ENCODE measurements at regions of chrX and their contacts with region 1.

Region 1: GRCh38 chrX:103686199-103687072 is at the start of gene MORF4L2:
- DNase-seq: peak; percentile 97
- ATAC-seq: peak; percentile 83
- H3K4me3 ChIP-seq: peak within 1 kb of the TSS; percentile 97
- H3K27ac ChIP-seq: peak within 1 kb of the TSS; percentile 98
- H3K4me1 ChIP-seq: peaks cover 22% of the 10 kb centered on the region
- H3K27me3 ChIP-seq: no peaks in the 10 kb centered on the region
- CTCF ChIP-seq: no peak
- total RNA-seq, gene MORF4L2: 349 and 414 TPM in 2 replicates

Region 2: DNA sequence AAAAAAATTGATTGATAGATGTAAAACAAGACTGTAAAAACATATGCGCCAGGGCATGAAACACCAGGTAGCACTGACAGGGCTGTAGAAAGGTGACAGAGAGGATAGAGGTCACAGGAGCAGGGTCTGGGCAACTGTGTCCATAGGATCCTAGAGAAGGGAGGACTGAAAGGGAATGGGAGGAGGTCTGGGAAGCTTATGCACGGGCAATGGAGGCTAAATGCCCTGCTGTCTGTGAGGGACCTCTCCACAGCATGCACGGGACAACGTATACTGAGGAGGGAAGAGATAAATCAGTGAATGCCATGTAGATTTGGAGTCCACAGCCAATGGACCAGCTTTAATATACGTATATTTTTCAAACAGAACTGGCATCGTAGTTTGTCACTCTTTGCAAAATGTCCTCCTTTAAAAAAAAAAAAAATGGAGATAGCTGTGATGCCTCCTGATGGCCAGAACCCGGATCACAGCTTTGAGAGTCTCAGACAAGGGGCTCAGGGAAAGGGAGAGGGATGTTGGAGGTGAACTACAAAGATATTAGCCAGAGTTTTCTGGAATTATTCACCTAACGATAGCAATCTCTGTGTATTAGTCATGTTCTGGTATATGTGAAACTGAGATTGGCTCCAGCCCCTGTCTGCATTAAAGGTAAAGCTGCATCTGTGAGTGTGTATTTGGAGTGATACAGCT is 183.1 kb before region 1 on chrX:
- CTCF ChIA-PET with region 1: no interaction called
- POLR2A ChIA-PET with region 1: no interaction called
- intact Hi-C with region 1: no loop called
- DNase-seq: peak; percentile 54
- ATAC-seq: peak; percentile 64
- H3K4me3 ChIP-seq: no peak overlapping the region
- H3K27ac ChIP-seq: no peak overlapping the region
- H3K4me1 ChIP-seq: peaks cover 7% of the 10 kb centered on the region; the same call in 1 of the 2 replicates
- H3K27me3 ChIP-seq: no peaks in the 10 kb centered on the region
- CTCF ChIP-seq: no peak

Region 3: DNA sequence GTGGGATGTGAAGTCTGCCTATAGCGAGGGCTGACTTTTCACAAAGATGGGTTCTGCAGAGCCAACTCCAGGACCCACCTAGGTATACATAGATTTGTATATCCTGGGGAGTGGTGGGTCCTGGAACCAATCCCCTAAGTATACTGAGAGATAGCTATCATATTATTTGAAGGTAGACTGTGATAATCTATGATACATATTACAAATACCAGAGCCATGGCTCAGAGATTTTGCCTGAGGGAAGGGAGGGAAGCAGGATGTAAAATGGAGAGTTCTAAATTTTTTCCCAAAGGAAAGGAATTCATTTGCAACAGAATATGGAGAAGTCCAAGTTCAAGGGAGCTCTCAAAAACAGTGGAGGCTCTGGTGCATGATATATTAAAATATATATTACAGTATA is 71.4 kb before region 1 on chrX:
- CTCF ChIA-PET with region 1: no interaction called
- POLR2A ChIA-PET with region 1: interaction called, 5 read pairs
- intact Hi-C with region 1: loop called (anchors 5 kb)
- DNase-seq: peak; percentile 90
- ATAC-seq: peak; percentile 72
- H3K4me3 ChIP-seq: peak overlapping the region; percentile 0; the same call in 1 of the 2 replicates
- H3K27ac ChIP-seq: peak overlapping the region; percentile 97
- H3K4me1 ChIP-seq: peaks cover 42% of the 10 kb centered on the region
- H3K27me3 ChIP-seq: no peaks in the 10 kb centered on the region
- CTCF ChIP-seq: no peak

Region 4: GRCh38 chrX:103637604-103638338 is 48.7 kb before region 1 on chrX:
- CTCF ChIA-PET with region 1: no interaction called
- POLR2A ChIA-PET with region 1: no interaction called
- intact Hi-C with region 1: loop called (anchors 2 kb)
- DNase-seq: peak; percentile 89
- ATAC-seq: peak; percentile 91
- H3K4me3 ChIP-seq: peak overlapping the region; percentile 0; the same call in 1 of the 2 replicates
- H3K27ac ChIP-seq: peak overlapping the region; percentile 91
- H3K4me1 ChIP-seq: peaks cover 60% of the 10 kb centered on the region
- H3K27me3 ChIP-seq: no peaks in the 10 kb centered on the region
- CTCF ChIP-seq: no peak

Region 5: DNA sequence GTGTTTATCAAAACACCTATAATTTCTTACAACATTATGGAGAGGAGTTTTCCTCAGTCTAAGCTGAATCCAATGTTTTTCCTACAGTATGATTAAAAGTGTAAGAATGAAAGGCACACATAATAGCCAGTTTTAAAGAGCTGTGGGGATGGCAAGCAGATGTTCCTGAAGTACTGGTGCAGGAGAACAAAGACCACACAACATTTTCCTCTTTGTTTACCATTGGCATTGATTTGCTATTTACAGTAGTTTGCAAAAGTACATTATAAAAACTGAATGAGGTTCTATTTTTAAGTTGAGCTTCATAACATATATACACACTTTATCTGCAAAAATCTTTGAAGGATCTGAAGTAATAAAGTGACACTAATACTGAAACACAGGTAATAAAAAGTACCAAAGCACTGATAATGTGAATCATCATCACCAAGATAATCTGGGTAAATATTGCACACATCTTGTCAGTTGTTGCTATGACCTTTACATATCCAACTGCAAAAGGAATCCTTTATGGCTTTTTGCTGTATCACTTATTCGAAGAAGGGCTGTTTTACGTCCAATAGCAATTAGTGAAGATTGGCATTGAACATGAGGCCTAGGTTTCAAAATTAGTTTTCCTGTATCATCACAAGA is 35.2 kb before region 1 on chrX:
- CTCF ChIA-PET with region 1: no interaction called
- POLR2A ChIA-PET with region 1: no interaction called
- intact Hi-C with region 1: no loop called
- DNase-seq: peak; percentile 41
- ATAC-seq: peak; percentile 62
- H3K4me3 ChIP-seq: no peak overlapping the region
- H3K27ac ChIP-seq: peak overlapping the region; percentile 52
- H3K4me1 ChIP-seq: peaks cover 27% of the 10 kb centered on the region
- H3K27me3 ChIP-seq: no peaks in the 10 kb centered on the region
- CTCF ChIP-seq: no peak

Region 6: GRCh38 chrX:103817502-103817901 is 131.1 kb after region 1 on chrX:
- CTCF ChIA-PET with region 1: no interaction called
- POLR2A ChIA-PET with region 1: no interaction called
- intact Hi-C with region 1: loop called (anchors 1 kb)
- DNase-seq: peak; percentile 87
- ATAC-seq: peak; percentile 60
- H3K4me3 ChIP-seq: no peak overlapping the region
- H3K27ac ChIP-seq: no peak overlapping the region
- H3K4me1 ChIP-seq: no peaks in the 10 kb centered on the region
- H3K27me3 ChIP-seq: no peaks in the 10 kb centered on the region
- CTCF ChIP-seq: peak; percentile 56